Caki2 (cell line): ENCODE measurements at regions of chr13 and their contacts with region 1.

Region 1: DNA sequence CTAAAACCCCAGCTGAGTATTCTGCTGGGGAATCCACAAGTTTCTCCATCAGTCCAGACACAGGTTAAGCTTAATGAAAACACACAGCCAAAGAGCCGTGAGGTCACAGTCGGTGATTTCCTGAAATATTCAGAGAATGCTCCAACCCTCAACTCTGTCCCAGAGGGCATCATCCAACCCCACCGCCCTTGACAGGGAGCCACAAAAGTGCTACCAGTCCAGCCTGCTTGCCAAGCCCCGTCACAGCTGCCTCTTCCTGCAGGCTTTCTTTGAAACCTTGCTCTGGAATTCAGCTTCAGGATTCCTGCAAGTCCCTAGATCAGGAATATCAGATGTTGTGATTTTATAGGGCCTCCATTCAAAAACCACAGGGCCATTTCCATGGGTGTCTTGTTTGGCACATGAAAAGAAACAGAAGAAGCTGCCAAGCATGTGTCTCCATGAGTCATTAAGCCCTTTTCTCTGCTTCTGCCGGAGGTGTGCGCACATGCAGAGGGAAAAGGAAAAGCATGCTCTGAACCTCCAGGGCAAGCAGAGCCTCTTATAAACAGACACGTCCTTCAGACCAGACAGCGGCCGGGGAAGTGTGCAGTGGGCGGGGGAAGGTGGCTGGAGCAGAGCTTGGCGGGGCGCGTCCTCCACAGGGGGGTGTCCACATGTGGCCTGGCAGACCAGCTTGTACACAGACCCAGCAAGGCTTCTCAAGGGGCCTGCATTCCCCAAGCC is 164.7 kb downstream of the KATNAL1 start:
- DNase-seq: peak; percentile 92

Region 2: GRCh38 chr13:30429721-30430694 is 287.4 kb after region 1 on chr13:
- in situ Hi-C with region 1: loop called (anchors 10 kb)
- DNase-seq: peak; percentile 76